ENCODE measurements at regions of chr15 and their contacts with region 1.

Region 1: DNA sequence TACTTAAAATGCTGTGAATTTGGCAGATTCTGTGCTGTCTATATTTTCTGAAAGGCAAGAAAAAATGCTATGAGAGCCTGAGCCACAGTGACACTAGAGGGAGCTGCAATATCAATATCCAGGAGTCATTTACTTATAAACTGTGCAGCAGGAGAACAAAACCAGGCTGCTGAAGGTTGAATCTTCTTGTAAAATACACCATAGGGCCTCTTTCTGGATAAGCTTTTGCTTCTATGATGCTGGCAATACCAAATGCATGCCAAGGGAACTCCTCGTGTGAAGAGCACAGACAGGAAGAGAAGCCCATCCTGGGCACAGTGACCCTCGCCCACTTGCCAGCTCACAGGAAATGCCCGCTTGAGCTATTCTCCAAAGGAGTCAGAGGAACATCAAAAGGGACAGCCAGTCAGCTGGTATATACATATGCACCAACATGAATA is 48.0 kb upstream of the TSPAN3 start:
- H3K4me3 ChIP-seq: no peak overlapping the region
- H3K27ac ChIP-seq: no peak overlapping the region
- H3K4me1 ChIP-seq: no peaks in the 10 kb centered on the region
- CTCF ChIP-seq: peak; percentile 25; the same call in 1 of the 2 replicates

Region 2: GRCh38 chr15:77087213-77087612 is 31.7 kb before region 1 on chr15:
- CTCF ChIA-PET with region 1: no interaction called
- POLR2A ChIA-PET with region 1: no interaction called
- H3K4me3 ChIP-seq: no peak overlapping the region
- H3K27ac ChIP-seq: no peak overlapping the region
- H3K4me1 ChIP-seq: peaks cover 8% of the 10 kb centered on the region
- CTCF ChIP-seq: no peak

Region 3: DNA sequence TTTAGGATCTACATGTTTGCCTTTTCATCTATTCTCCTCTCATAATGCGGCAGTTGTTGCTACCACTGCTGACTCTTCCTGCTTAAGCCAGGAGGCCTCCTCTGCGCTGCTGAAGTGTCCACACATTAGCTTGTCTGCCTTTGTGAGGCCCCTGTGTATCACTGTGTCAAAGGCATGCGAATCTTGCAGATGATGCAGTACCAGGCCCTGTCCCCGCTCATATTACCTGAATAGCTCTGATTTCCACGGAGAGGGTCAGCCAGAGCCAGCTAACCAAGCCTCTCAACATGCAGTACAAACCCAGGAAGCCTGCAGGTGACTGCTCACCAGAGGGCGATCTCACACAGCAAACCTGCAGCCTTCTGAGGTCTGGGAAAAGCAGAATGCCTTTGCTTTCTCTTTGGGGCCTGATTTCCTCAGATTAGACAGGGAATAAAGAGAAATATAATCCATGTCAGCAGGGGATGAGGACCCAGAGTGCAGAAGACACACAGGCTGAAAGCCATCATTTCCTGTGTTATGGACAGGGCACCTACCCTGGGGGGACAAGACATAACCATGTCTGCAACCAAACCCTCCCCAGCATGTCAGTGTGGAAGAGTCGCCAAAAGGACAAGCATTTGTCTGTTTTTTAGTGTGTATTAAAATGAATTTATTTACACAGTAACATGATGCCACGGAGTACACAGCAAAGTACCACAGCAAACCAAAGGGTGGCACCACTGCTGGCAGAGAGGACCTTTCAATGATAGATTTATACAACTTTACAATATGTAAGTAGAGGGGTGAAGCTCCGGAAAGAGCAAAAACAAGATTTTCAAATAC is 11.2 kb before region 1 on chr15:
- CTCF ChIA-PET with region 1: interaction called, 32 read pairs
- POLR2A ChIA-PET with region 1: no interaction called
- H3K4me3 ChIP-seq: no peak overlapping the region
- H3K27ac ChIP-seq: no peak overlapping the region
- H3K4me1 ChIP-seq: no peaks in the 10 kb centered on the region
- CTCF ChIP-seq: peak; percentile 70

Region 4: GRCh38 chr15:77148191-77148590 is 29.3 kb after region 1 on chr15:
- CTCF ChIA-PET with region 1: interaction called, 23 read pairs
- POLR2A ChIA-PET with region 1: no interaction called
- H3K4me3 ChIP-seq: no peak overlapping the region
- H3K27ac ChIP-seq: no peak overlapping the region
- H3K4me1 ChIP-seq: no peaks in the 10 kb centered on the region
- CTCF ChIP-seq: no peak

Region 5: GRCh38 chr15:77419836-77420609 is 301.1 kb after region 1 on chr15 and contains the start of gene PEAK1:
- CTCF ChIA-PET with region 1: interaction called, 16 read pairs
- POLR2A ChIA-PET with region 1: no interaction called
- H3K4me3 ChIP-seq: peak within 1 kb of the TSS; percentile 73
- H3K27ac ChIP-seq: peak within 1 kb of the TSS; percentile 86
- H3K4me1 ChIP-seq: peaks cover 32% of the 10 kb centered on the region
- CTCF ChIP-seq: no peak

Measured in HEK293 (cell line).